ENCODE measurements at regions of chr6 and their contacts with region 1.

Region 1: GRCh38 chr6:44064089-44064947 is 62.9 kb downstream of the MRPL14 start:
- DNase-seq: peak in 4 of 5 donors; percentile 57 to 88 (median 69)
- ATAC-seq: peak; percentile 17 to 81 (median 68)
- H3K4me3 ChIP-seq: no peak overlapping the region
- H3K27ac ChIP-seq: peak overlapping the region in 9 of 12 donors; percentile 3 to 93 (median 65)
- H3K4me1 ChIP-seq: peaks cover 5 to 80% (median 46%) of the 10 kb centered on the region in 12 donors
- H3K27me3 ChIP-seq: no peaks in the 10 kb centered on the region
- CTCF ChIP-seq: no peak
- POLR2A ChIP-seq: no peak

Region 2: GRCh38 chr6:43856005-43856765 is 208.1 kb before region 1 on chr6:
- intact Hi-C with region 1: loop called in 1 of 10 experiments (anchors 10 kb)
- DNase-seq: peak in 2 of 5 donors; percentile 46 to 53
- ATAC-seq: peak; percentile 14 to 79 (median 59)
- H3K4me3 ChIP-seq: no peak overlapping the region
- H3K27ac ChIP-seq: no peak overlapping the region
- H3K4me1 ChIP-seq: no peaks in the 10 kb centered on the region
- H3K27me3 ChIP-seq: no peaks in the 10 kb centered on the region
- CTCF ChIP-seq: peak in 10 of 12 donors; percentile 21 to 55 (median 38)
- POLR2A ChIP-seq: no peak

Region 3: GRCh38 chr6:44028789-44029310 is 35.5 kb before region 1 on chr6:
- intact Hi-C with region 1: no loop called
- DNase-seq: peak in 1 of 5 donors; percentile 51
- ATAC-seq: peak in 1 of 4 donors; percentile 33
- H3K4me3 ChIP-seq: no peak overlapping the region
- H3K27ac ChIP-seq: no peak overlapping the region
- H3K4me1 ChIP-seq: peaks cover 0 to 5% (median 0%) of the 10 kb centered on the region in 12 donors
- H3K27me3 ChIP-seq: no peaks in the 10 kb centered on the region
- CTCF ChIP-seq: no peak
- POLR2A ChIP-seq: no peak

Measured in heart left ventricle (tissue), 16 donors.